ENCODE measurements at regions of chr1 and their contacts with region 1.

Region 1: DNA sequence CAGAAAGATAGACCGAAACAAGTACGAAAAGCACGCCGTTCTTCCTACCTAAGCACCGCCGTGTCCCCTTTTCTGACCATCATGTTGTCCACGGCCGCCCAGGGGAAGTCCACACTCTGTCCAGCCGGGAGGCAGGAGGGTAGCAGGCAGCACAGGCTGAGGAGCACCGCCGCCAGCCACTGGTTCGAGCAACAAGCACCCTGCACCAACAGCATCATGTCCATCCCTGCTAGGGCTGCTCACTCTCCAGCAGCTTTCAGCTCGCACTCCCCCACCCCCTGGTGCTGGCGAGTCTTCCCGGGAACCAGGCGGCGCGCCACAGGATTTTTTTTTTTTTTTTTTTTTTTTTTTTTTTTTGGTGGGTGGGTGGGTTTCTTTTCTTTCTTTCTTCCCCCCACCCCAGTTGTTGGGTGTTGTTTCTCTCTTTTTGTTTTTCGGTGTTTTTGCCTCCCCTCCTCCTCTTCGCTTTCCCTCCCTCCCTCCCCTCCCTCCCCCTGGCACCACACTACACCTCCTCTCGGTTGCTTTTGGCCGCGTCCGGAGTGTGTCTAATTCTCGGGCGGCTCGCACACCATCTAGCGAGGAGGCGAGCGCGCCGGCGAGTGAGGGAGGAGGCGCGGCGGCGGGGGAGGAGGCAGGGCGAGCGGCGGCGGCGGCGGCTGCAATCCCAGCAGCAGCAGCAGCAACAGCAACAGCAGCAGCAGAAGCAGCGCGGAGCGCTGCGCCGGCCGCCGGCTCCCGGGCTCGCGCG is at the start of gene NEGR1:
- DNase-seq: peak; percentile 89
- H3K4me3 Mint-ChIP-seq: no peak within 1 kb of the TSS
- H3K27ac Mint-ChIP-seq: peak within 1 kb of the TSS; percentile 63
- H3K4me1 Mint-ChIP-seq: peaks cover 23% of the 10 kb centered on the region
- H3K27me3 Mint-ChIP-seq: no peaks in the 10 kb centered on the region
- CTCF ChIP-seq: no peak
- total RNA-seq, gene NEGR1: 15.1 and 19.2 TPM in 2 replicates

Region 2: GRCh38 chr1:71861022-71861421 is 421.4 kb before region 1 on chr1:
- CTCF ChIA-PET with region 1: no interaction called
- intact Hi-C with region 1: no loop called
- DNase-seq: no peak
- H3K4me3 Mint-ChIP-seq: no peak overlapping the region
- H3K27ac Mint-ChIP-seq: no peak overlapping the region
- H3K4me1 Mint-ChIP-seq: no peaks in the 10 kb centered on the region
- H3K27me3 Mint-ChIP-seq: no peaks in the 10 kb centered on the region
- CTCF ChIP-seq: no peak

Region 3: DNA sequence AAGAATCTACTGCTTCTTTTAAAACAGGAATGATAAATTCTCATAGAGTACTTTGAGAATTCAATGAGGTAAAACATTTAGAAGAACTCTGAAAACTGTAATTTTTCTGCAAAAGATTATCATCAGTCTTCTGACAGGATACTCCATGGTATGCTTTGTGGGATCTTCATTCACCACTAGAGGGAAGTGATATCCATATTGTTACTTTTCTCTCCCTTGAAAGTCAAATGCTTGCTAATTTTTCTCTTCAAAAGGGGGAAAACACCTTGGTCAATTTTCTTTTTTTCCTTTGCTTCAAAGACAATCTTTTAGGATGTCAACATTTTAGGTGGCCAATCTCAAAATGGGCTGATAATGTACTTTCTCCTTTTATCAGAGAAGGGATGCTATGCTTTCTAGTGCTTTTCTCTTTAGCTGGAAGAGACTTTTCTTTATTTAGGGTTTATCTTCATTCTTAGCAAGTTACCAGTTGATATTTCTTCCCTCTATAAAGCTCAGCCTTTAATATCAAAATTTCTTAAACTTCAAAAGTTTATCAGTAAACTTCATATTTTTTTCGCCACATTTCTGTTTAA is 95.6 kb before region 1 on chr1:
- CTCF ChIA-PET with region 1: no interaction called
- intact Hi-C with region 1: loop called (anchors 5 kb)
- DNase-seq: no peak
- H3K4me3 Mint-ChIP-seq: no peak overlapping the region
- H3K27ac Mint-ChIP-seq: no peak overlapping the region
- H3K4me1 Mint-ChIP-seq: no peaks in the 10 kb centered on the region
- H3K27me3 Mint-ChIP-seq: no peaks in the 10 kb centered on the region
- CTCF ChIP-seq: peak; percentile 33

Region 4: GRCh38 chr1:72366473-72366872 is 84.0 kb after region 1 on chr1:
- CTCF ChIA-PET with region 1: interaction called, 4 read pairs
- intact Hi-C with region 1: loop called (anchors 5 kb)
- DNase-seq: peak; percentile 57
- H3K4me3 Mint-ChIP-seq: no peak overlapping the region
- H3K27ac Mint-ChIP-seq: no peak overlapping the region
- H3K4me1 Mint-ChIP-seq: peaks cover 22% of the 10 kb centered on the region
- H3K27me3 Mint-ChIP-seq: no peaks in the 10 kb centered on the region
- CTCF ChIP-seq: no peak

Region 5: DNA sequence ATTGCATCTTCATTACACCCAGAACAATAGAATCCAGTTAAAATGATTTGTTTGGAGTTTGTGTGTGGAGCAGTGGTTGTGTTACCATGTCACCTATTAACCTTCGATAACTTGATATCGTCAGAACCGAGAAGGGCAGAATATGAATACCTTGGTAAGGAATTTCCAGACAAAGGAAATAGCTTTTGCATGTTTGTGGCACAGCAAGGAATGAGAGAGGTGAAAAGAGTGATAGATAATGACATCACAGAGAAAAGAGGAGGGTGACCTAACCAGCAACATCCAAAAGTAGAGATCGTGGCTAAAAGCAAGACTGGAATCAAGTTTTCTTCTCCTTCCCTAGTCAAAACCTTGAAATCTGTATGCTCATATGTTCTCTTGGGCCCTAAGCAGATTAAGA is 244.5 kb after region 1 on chr1:
- CTCF ChIA-PET with region 1: no interaction called
- intact Hi-C with region 1: loop called (anchors 10 kb)
- DNase-seq: no peak
- H3K4me3 Mint-ChIP-seq: no peak overlapping the region
- H3K27ac Mint-ChIP-seq: no peak overlapping the region
- H3K4me1 Mint-ChIP-seq: no peaks in the 10 kb centered on the region
- H3K27me3 Mint-ChIP-seq: no peaks in the 10 kb centered on the region
- CTCF ChIP-seq: no peak

Region 6: DNA sequence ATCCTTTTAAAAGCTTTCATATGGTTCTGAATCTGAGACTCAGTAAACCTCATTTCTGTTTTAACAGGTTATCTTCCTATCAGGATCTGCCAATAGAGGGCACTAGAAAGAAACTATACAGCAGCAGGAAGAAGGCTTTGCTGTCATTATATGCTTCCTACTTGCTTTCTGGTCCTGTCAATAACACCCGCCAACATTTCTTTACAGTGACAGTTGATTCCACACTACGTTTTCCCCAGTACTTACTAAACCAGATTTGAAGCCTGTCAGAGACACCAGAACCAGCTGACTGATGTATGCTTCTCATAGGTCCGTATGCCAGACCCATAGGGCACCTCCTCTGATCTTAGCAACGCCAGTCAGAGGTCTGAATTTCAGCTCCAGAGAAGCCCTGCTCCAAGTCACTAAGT is 340.9 kb after region 1 on chr1:
- CTCF ChIA-PET with region 1: interaction called, 3 read pairs
- intact Hi-C with region 1: loop called (anchors 5 kb)
- DNase-seq: peak; percentile 9
- H3K4me3 Mint-ChIP-seq: peak overlapping the region; percentile 74
- H3K27ac Mint-ChIP-seq: peak overlapping the region; percentile 78
- H3K4me1 Mint-ChIP-seq: peaks cover 8% of the 10 kb centered on the region
- H3K27me3 Mint-ChIP-seq: no peaks in the 10 kb centered on the region
- CTCF ChIP-seq: peak; percentile 32

Measured in Calu3 (cell line).